ENCODE measurements at regions of chr2 and their contacts with region 1.

Region 1: GRCh38 chr2:39513641-39514094 is 76.6 kb upstream of the MAP4K3 start:
- DNase-seq: peak in 4 of 5 donors; percentile 62 to 77 (median 70)
- ATAC-seq: peak; percentile 36 to 77 (median 76)
- H3K4me3 ChIP-seq: no peak overlapping the region
- H3K27ac ChIP-seq: peak overlapping the region in 11 of 12 donors; percentile 38 to 89 (median 76)
- H3K4me1 ChIP-seq: peaks cover 16 to 100% (median 85%) of the 10 kb centered on the region in 12 donors
- H3K27me3 ChIP-seq: no peaks in the 10 kb centered on the region
- CTCF ChIP-seq: peak; percentile 51 to 78 (median 62)
- POLR2A ChIP-seq: no peak

Region 2: DNA sequence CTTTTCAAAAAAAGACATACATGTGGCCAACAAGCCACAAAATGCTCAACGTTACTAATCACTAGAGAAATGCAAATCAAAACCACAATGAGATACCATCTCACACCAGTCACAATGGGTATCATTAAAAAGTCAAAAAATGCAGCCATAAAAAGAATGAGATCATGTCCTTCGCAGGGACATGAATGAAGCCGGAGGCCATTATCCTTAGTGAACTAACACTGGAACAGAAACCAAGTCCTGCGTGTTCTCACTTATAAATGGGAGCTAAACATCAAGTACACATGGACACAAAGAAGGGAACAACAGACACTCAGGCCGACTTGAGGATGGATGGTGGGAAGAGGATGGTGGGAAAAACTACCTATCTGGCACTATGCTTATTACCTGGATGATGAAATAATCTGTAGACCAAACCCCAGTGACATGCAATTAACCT is 1118.7 kb before region 1 on chr2:
- intact Hi-C with region 1: no loop called
- DNase-seq: no peak
- ATAC-seq: no peak
- H3K4me3 ChIP-seq: no peak overlapping the region
- H3K27ac ChIP-seq: no peak overlapping the region
- H3K4me1 ChIP-seq: no peaks in the 10 kb centered on the region
- H3K27me3 ChIP-seq: no peaks in the 10 kb centered on the region
- CTCF ChIP-seq: no peak
- POLR2A ChIP-seq: no peak

Region 3: GRCh38 chr2:39593439-39594393 is 80.0 kb after region 1 on chr2:
- intact Hi-C with region 1: loop called in 2 of 10 experiments (anchors 5 kb)
- DNase-seq: peak in 4 of 5 donors; percentile 42 to 63 (median 56)
- ATAC-seq: peak; percentile 30 to 93 (median 87)
- H3K4me3 ChIP-seq: no peak overlapping the region
- H3K27ac ChIP-seq: no peak overlapping the region
- H3K4me1 ChIP-seq: peaks cover 0 to 5% (median 2%) of the 10 kb centered on the region in 12 donors
- H3K27me3 ChIP-seq: no peaks in the 10 kb centered on the region
- CTCF ChIP-seq: peak; percentile 34 to 75 (median 66)
- POLR2A ChIP-seq: no peak

Region 4: GRCh38 chr2:39696838-39697237 is 183.2 kb after region 1 on chr2:
- intact Hi-C with region 1: loop called (anchors 1 to 5 kb)
- DNase-seq: no peak
- ATAC-seq: peak; percentile 47 to 77 (median 70)
- H3K4me3 ChIP-seq: no peak overlapping the region
- H3K27ac ChIP-seq: peak overlapping the region in 11 of 12 donors; percentile 33 to 60 (median 47)
- H3K4me1 ChIP-seq: peaks cover 0 to 31% (median 14%) of the 10 kb centered on the region in 12 donors
- H3K27me3 ChIP-seq: no peaks in the 10 kb centered on the region
- CTCF ChIP-seq: peak; percentile 19 to 67 (median 56)
- POLR2A ChIP-seq: no peak

Region 5: DNA sequence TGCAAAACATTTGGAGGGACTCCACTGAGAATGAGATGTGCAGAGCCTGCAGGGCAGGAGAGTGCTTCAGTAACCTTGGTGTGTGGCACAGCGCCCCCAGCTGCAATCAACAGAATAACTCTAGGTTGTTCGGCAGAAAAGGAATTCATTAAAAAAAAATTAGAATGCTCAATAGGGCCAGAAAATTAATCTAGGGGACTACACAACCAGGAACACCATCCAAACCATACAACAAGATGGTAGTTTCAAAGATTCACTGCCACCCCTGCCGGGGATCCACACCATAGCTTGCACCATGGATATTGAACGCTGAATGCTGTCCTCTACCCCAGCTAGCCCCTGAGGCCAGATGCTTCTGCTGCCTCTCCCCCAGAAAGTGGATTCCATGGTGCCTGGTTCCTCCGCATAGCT is 215.3 kb after region 1 on chr2:
- intact Hi-C with region 1: loop called in 2 of 10 experiments (anchors 5 kb)
- DNase-seq: peak in 2 of 5 donors; percentile 28 to 39
- ATAC-seq: peak in 1 of 4 donors; percentile 40
- H3K4me3 ChIP-seq: no peak overlapping the region
- H3K27ac ChIP-seq: no peak overlapping the region
- H3K4me1 ChIP-seq: peaks cover 0 to 19% (median 2%) of the 10 kb centered on the region in 12 donors
- H3K27me3 ChIP-seq: no peaks in the 10 kb centered on the region
- CTCF ChIP-seq: peak; percentile 34 to 72 (median 60)
- POLR2A ChIP-seq: no peak

Measured in heart left ventricle (tissue), 16 donors.